MCF 10A (cell line): ENCODE measurements at regions of chr5 and their contacts with region 1.

Region 1: DNA sequence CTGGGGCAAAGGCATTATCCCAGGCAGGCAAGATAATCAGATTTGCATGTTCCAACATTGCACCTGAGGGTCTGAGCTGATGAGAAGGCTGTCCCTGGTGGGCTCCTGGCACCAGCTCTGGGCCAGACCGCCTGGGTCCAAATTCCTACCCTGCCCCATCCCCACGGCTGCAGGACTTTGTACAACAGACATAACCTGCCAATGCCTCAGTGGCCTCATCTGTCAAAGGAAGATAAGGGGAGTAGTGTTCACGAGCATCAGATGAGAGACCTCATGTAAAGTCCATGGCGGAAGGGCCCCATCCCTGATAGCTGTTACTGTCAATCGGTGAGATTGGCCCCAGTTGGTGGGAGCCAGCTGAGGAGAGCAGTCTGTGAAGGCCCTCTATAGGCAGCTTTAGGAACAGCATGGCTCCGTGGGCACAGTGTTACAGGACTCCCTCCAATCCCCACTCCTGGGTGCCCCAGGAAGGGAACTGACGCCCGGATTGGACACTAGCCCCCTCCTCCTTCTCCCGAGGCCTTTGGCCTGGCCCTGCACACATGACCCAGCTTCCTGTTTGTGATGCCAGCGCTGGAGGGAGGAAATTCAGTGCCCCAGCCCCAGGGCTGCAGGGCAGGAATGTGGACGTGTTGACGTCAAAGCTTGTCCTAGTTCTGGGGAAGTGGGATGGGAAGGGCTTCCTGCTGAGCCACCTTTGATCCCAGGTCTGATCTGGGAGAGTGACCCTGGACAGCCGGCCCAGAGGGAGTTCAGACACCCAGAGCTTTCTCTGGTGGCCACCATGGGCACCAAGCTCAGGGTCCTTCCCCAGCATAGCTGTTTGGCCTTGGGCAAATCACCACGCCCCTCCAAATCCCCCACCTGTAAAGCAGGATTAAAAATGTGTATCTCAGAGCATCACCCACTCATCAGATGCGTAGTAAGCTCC is 56.2 kb downstream of the DUSP1 start:
- DNase-seq: peak; percentile 99
- H3K4me3 Mint-ChIP-seq: no peak overlapping the region
- H3K27ac Mint-ChIP-seq: peak overlapping the region; percentile 80
- H3K4me1 Mint-ChIP-seq: peaks cover 40% of the 10 kb centered on the region
- H3K27me3 Mint-ChIP-seq: no peaks in the 10 kb centered on the region
- CTCF ChIP-seq: peak; percentile 97

Region 2: DNA sequence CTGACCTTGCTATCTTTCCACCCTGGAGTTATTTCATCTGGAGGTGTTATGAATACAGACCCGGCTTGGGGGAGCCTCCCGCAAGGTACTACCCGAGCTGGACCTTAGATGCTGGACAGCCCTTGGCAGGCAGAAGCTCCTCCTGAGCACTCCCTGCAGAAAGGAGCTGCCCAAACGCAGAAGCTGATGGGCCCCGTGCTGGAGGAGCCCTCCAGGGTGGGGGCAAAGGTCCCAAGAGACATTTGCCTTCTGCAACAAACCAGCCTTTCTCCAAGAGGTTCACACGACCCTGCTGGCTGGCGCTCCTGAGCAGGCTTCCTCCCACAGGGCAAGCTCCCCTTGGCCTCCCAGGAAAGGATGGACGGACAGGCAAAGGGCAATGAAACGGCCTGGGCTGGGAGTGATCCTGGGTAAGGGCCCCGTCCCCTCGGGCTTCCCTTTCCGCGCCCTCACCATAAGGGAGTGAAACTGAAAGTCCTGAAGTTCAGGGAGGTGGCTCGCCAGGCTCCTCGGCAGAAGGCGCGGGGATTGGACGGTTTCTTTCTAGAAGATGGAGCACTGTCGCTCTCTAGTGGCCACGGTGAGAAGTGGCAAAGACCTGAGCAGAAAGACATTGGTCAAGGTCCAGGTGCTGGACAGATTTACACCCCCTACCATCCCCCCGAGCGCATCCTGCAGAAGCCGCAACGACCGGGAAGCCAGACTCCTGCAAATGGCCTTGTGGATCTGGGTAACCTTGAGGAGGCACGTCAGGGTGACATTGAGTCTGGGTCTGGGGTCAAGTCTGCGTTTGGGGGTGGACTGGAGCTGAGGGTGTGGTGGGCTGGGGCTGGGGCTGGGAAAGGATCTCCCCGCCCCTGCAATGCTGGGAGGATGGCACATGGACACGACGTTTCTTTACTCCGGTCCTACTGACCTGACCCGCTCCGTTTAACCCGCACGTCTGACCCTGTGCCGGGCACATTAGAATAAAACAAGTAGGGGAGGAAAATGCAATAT is 17.3 kb before region 1 on chr5:
- CTCF ChIA-PET with region 1: interaction called, 10 read pairs
- POLR2A ChIA-PET with region 1: no interaction called
- intact Hi-C with region 1: no loop called
- DNase-seq: peak; percentile 94
- H3K4me3 Mint-ChIP-seq: peak overlapping the region; percentile 82
- H3K27ac Mint-ChIP-seq: peak overlapping the region; percentile 82
- H3K4me1 Mint-ChIP-seq: peaks cover 17% of the 10 kb centered on the region
- H3K27me3 Mint-ChIP-seq: peaks cover 14% of the 10 kb centered on the region
- CTCF ChIP-seq: peak; percentile 99

Region 3: GRCh38 chr5:172764849-172765765 is 50.4 kb after region 1 on chr5:
- CTCF ChIA-PET with region 1: interaction called, 66 read pairs
- POLR2A ChIA-PET with region 1: interaction called, 53 read pairs
- intact Hi-C with region 1: loop called (anchors 1 kb)
- DNase-seq: peak; percentile 100
- H3K4me3 Mint-ChIP-seq: peak overlapping the region; percentile 98
- H3K27ac Mint-ChIP-seq: peak overlapping the region; percentile 99
- H3K4me1 Mint-ChIP-seq: peaks cover 24% of the 10 kb centered on the region
- H3K27me3 Mint-ChIP-seq: no peaks in the 10 kb centered on the region
- CTCF ChIP-seq: no peak

Region 4: DNA sequence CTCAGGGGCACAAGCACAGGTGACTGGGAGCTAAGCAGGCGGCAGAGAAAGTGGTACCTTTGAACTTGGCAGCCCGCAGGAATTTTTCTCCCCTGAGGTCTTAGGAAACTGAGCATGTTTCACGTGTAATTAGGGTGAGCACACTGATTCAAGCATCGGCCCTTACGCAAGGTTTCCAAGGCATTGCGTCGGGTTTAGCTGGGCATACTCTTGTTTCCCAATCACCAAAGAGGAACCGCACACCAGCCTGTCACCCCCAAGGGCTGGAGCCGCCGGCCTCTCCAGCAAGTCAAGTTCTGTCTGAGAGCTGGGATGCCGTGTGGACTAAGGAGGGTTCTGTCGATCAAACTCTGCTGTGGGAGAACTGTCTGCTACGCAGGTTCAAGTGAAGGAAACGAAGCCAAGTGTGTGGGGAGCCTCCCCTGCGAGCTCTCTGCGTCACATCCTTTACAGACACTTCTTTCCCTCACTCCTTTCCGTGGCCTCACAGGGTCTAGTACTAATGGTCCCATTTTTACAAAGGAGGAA is 172.3 kb after region 1 on chr5:
- CTCF ChIA-PET with region 1: interaction called, 11 read pairs
- POLR2A ChIA-PET with region 1: interaction called, 3 read pairs
- intact Hi-C with region 1: no loop called
- DNase-seq: peak; percentile 100
- H3K4me3 Mint-ChIP-seq: peak overlapping the region; percentile 61
- H3K27ac Mint-ChIP-seq: peak overlapping the region; percentile 98
- H3K4me1 Mint-ChIP-seq: peaks cover 46% of the 10 kb centered on the region
- H3K27me3 Mint-ChIP-seq: no peaks in the 10 kb centered on the region
- CTCF ChIP-seq: no peak

Region 5: DNA sequence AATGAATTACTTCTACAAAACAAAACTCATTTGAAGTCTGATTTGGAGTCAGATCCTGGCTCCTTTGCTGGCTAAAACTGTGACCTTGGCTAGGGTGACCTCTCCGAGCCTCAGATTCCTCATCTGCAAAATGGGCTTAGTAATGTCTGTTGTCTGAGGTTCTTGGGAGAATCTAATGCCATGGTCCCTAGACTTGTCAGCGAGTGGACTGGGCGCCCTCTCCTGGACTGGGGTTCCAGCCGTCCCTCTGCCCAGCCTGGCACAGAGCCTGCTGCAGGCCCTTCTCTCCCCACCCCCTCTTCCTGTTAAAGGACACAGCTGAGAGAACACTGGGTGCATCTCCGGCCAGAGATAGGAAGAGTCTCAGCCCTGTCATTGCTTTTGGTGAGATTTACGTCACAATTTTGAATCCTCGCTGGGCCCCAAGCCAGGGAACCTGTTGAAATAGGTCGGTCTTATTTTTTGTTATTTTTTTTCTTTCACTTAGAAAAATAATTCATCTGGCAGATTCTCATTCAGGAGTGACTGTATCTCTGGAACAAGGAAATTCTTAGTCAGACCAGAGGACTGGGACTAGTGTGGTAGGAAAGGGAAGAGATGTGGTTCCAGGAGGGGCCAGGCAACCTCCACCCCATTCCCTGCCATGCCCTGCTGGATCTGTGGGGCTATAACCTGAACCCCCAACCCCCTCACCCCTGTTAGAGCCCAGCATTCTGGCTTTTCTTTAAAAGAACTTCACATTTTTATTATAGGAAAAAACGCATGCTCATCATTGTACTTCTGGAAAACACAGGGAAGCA is 196.3 kb after region 1 on chr5:
- CTCF ChIA-PET with region 1: interaction called, 25 read pairs
- POLR2A ChIA-PET with region 1: interaction called, 25 read pairs
- intact Hi-C with region 1: loop called (anchors 1 kb)
- DNase-seq: peak; percentile 99
- H3K4me3 Mint-ChIP-seq: no peak overlapping the region
- H3K27ac Mint-ChIP-seq: peak overlapping the region; percentile 90
- H3K4me1 Mint-ChIP-seq: peaks cover 43% of the 10 kb centered on the region
- H3K27me3 Mint-ChIP-seq: no peaks in the 10 kb centered on the region
- CTCF ChIP-seq: peak; percentile 50

Region 6: GRCh38 chr5:172958331-172959046 is 243.7 kb after region 1 on chr5:
- CTCF ChIA-PET with region 1: interaction called, 42 read pairs
- POLR2A ChIA-PET with region 1: interaction called, 5 read pairs
- intact Hi-C with region 1: loop called (anchors 1 kb)
- DNase-seq: peak; percentile 80
- H3K4me3 Mint-ChIP-seq: peak overlapping the region; percentile 94
- H3K27ac Mint-ChIP-seq: peak overlapping the region; percentile 98
- H3K4me1 Mint-ChIP-seq: peaks cover 49% of the 10 kb centered on the region
- H3K27me3 Mint-ChIP-seq: no peaks in the 10 kb centered on the region
- CTCF ChIP-seq: no peak

Region 7: DNA sequence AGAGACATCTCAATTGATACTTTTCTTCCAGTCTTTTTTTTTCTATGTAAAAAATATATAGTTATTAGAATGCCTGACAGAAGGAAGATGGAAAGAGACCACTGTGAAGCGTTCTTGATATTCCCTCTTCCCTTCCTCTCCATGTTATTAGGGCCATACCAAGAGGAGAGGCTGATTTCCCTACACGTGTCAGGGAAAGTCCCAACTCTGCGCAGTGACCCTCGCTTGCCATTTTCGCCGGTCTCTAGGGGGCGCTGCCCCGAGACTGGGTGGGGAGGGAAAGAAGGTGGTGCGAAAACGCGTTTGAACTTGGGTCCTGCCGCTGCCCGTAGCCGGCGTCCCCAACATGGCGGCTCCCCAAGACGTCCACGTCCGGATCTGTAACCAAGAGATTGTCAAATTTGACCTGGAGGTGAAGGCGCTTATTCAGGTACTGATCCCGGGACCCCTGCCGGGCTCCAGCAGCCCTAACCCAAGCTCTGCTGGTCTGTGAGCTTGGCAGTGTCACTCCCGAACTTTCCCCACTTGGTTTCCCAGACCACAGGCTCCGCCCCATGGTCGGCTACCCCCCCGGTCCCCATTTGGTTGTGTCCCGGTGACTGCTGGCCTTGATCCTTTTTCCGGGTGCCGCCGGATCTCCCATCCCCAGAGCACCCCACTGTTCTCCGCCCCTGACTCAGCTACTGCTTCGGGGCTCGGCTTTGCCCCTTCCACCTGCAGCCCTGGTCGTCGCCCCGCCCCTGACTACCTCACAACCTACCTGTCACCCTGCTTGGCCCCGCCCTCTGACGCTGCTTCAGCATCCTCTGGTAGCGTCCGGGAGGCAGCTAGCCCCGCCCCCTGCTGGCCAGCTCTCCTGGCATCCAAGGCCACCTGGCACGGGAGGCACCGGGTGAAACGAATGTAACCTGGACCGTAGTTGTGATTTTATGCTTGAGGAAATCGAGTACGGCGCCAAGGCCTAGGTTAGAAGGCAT is 429.7 kb after region 1 on chr5 and contains the start of gene BNIP1:
- CTCF ChIA-PET with region 1: interaction called, 3 read pairs
- POLR2A ChIA-PET with region 1: no interaction called
- intact Hi-C with region 1: loop called (anchors 1 kb)
- DNase-seq: peak; percentile 98
- H3K4me3 Mint-ChIP-seq: peak within 1 kb of the TSS; percentile 98
- H3K27ac Mint-ChIP-seq: peak within 1 kb of the TSS; percentile 97
- H3K4me1 Mint-ChIP-seq: no peaks in the 10 kb centered on the region
- H3K27me3 Mint-ChIP-seq: no peaks in the 10 kb centered on the region
- CTCF ChIP-seq: peak; percentile 98
- total RNA-seq, gene BNIP1: 22.1 and 35.1 TPM in 2 replicates